Activated naive CD4-positive, alpha-beta T cell treated with anti-CD3 and anti-CD28 coated beads for 36 hours (primary cell): ENCODE measurements at regions of chr1 and their contacts with region 1.

Region 1: DNA sequence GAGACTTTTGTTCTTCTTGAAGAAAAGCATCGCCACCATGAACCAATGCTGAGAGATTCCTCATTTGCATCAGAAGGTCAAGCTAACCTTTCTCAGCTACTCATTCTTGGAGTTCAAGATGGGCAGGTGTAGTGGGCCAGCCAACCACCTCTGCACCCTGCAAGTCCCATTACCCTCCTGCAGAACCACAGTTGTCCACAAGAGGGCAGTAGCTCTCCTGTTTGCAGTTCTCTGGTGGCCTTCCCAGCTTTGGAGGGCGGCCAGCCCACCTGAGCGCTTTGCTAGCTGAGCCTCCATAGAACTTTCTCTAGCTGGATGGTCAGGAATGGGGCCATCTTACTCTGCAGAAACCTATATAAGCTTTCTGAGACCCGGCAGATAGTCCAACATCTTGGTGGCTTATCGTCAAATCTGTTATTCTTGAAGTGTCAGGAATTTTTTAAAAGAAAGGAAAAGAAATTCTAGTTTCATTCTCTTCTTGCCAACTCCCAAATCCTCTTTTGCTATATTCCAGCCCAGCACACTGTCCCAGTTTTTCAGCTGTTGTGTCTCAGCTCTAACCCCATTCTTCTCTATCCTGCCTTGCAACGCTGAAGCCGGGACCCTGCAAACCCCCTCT is 11.0 kb upstream of the LMX1A start:
- DNase-seq: peak; percentile 88
- H3K4me3 Mint-ChIP-seq: no peak overlapping the region
- H3K27ac Mint-ChIP-seq: no peak overlapping the region
- H3K4me1 Mint-ChIP-seq: no peaks in the 10 kb centered on the region
- H3K27me3 Mint-ChIP-seq: peaks cover 59% of the 10 kb centered on the region

Region 2: GRCh38 chr1:165114022-165114888 is 253.2 kb before region 1 on chr1:
- CTCF ChIA-PET with region 1: interaction called, 13 read pairs
- intact Hi-C with region 1: loop called (anchors 2 kb)
- DNase-seq: peak; percentile 45
- H3K4me3 Mint-ChIP-seq: no peak overlapping the region
- H3K27ac Mint-ChIP-seq: no peak overlapping the region
- H3K4me1 Mint-ChIP-seq: no peaks in the 10 kb centered on the region
- H3K27me3 Mint-ChIP-seq: peaks cover 33% of the 10 kb centered on the region

Region 3: GRCh38 chr1:165129568-165130164 is 237.8 kb before region 1 on chr1:
- CTCF ChIA-PET with region 1: interaction called, 7 read pairs
- intact Hi-C with region 1: loop called (anchors 1 kb)
- DNase-seq: peak; percentile 61
- H3K4me3 Mint-ChIP-seq: no peak overlapping the region
- H3K27ac Mint-ChIP-seq: no peak overlapping the region
- H3K4me1 Mint-ChIP-seq: no peaks in the 10 kb centered on the region
- H3K27me3 Mint-ChIP-seq: peaks cover 10% of the 10 kb centered on the region

Region 4: GRCh38 chr1:165144757-165145397 is 222.6 kb before region 1 on chr1:
- CTCF ChIA-PET with region 1: interaction called, 15 read pairs
- intact Hi-C with region 1: loop called (anchors 2 kb)
- DNase-seq: peak; percentile 59
- H3K4me3 Mint-ChIP-seq: no peak overlapping the region
- H3K27ac Mint-ChIP-seq: no peak overlapping the region
- H3K4me1 Mint-ChIP-seq: no peaks in the 10 kb centered on the region
- H3K27me3 Mint-ChIP-seq: peaks cover 30% of the 10 kb centered on the region

Region 5: GRCh38 chr1:165257969-165258459 is 109.5 kb before region 1 on chr1:
- CTCF ChIA-PET with region 1: interaction called, 6 read pairs
- intact Hi-C with region 1: loop called (anchors 2 kb)
- DNase-seq: peak; percentile 65
- H3K4me3 Mint-ChIP-seq: no peak overlapping the region
- H3K27ac Mint-ChIP-seq: no peak overlapping the region
- H3K4me1 Mint-ChIP-seq: no peaks in the 10 kb centered on the region
- H3K27me3 Mint-ChIP-seq: peaks cover 24% of the 10 kb centered on the region

Region 6: GRCh38 chr1:165383067-165383466 is 15.6 kb after region 1 on chr1:
- CTCF ChIA-PET with region 1: interaction called, 52 read pairs
- intact Hi-C with region 1: no loop called
- DNase-seq: no peak
- H3K4me3 Mint-ChIP-seq: no peak overlapping the region
- H3K27ac Mint-ChIP-seq: no peak overlapping the region
- H3K4me1 Mint-ChIP-seq: no peaks in the 10 kb centered on the region
- H3K27me3 Mint-ChIP-seq: peaks cover 31% of the 10 kb centered on the region

Region 7: DNA sequence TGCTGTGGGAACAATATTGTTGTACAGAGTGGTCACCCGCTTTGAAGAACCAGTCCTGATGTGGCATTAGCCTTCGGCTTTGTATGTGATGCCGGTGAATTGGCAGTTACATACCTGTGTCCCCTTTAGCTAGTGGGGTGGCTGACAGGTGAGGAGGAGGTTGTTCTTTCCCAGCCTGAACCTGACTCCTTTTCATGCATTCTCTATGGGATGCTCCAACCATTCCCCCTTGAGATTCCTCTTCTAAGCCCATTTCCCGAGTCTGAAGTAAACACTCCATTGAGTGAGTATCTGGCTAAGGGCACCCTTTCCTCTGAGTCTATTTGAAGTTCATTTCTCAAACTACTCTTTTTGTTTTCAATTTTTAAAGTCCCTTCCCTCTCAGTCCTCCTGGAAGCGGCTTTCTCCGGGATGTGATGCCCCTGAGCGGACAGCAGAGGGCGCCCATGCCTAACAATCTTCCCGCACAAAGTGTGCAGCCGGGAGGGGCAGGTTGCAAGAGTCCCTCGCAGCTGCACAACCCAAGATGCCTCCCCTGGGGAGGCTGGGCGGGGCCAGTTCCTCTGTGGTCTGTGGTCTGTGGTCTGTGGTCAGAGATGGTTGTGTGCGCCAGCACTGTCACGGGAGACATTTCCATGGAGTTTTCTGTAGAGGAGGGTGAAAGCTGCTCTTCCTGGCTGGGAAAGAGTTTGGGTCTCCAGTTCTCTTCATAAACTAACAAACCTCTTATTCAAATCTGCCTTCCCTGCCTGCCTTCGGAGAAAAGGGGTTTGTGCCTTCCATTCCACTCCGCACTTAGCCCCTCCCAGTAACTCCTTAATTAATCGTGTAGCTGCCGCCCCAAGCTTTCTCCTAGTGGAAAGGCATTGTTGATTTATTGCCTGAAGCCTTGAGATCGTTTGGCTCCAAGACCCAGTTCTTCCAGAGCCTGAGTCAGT is 25.4 kb after region 1 on chr1:
- CTCF ChIA-PET with region 1: interaction called, 34 read pairs
- intact Hi-C with region 1: no loop called
- DNase-seq: peak; percentile 91
- H3K4me3 Mint-ChIP-seq: peak overlapping the region; percentile 52
- H3K27ac Mint-ChIP-seq: peak overlapping the region; percentile 61
- H3K4me1 Mint-ChIP-seq: peaks cover 15% of the 10 kb centered on the region
- H3K27me3 Mint-ChIP-seq: peaks cover 54% of the 10 kb centered on the region